Common myeloid progenitor, CD34-positive (primary cell): ENCODE measurements at regions of chr11 and their contacts with region 1.

Region 1: GRCh38 chr11:121318848-121319834 is 26.6 kb downstream of the SC5D start:
- DNase-seq: peak; percentile 63 to 83 (median 81)
- H3K4me3 ChIP-seq: no peak overlapping the region
- H3K27ac ChIP-seq: no peak overlapping the region
- H3K4me1 ChIP-seq: peaks cover 7 to 13% (median 10%) of the 10 kb centered on the region in 4 experiments
- H3K27me3 ChIP-seq: no peaks in the 10 kb centered on the region

Region 2: GRCh38 chr11:121367001-121367843 is 48.1 kb after region 1 on chr11:
- CTCF ChIA-PET with region 1: no interaction called
- POLR2A ChIA-PET with region 1: no interaction called
- DNase-seq: peak; percentile 60 to 89 (median 89)
- H3K4me3 ChIP-seq: peak overlapping the region in 2 of 7 experiments; percentile 11 to 46
- H3K27ac ChIP-seq: no peak overlapping the region
- H3K4me1 ChIP-seq: peaks cover 8 to 19% (median 15%) of the 10 kb centered on the region in 4 experiments
- H3K27me3 ChIP-seq: no peaks in the 10 kb centered on the region

Region 3: GRCh38 chr11:121534131-121535093 is 215.3 kb after region 1 on chr11:
- CTCF ChIA-PET with region 1: interaction called, 15 read pairs
- POLR2A ChIA-PET with region 1: interaction called, 3 read pairs
- DNase-seq: peak; percentile 50 to 74 (median 73)
- H3K4me3 ChIP-seq: no peak overlapping the region
- H3K27ac ChIP-seq: no peak overlapping the region
- H3K4me1 ChIP-seq: peaks cover 6 to 10% (median 9%) of the 10 kb centered on the region in 4 experiments
- H3K27me3 ChIP-seq: no peaks in the 10 kb centered on the region

Region 4: GRCh38 chr11:121591405-121592033 is 272.4 kb after region 1 on chr11:
- CTCF ChIA-PET with region 1: interaction called, 49 read pairs
- POLR2A ChIA-PET with region 1: interaction called, 3 read pairs
- DNase-seq: peak; percentile 83 to 90 (median 85)
- H3K4me3 ChIP-seq: peak overlapping the region in 5 of 7 experiments; percentile 51 to 68 (median 63)
- H3K27ac ChIP-seq: peak overlapping the region in 1 of 2 experiments; percentile 84
- H3K4me1 ChIP-seq: peaks cover 26 to 69% (median 53%) of the 10 kb centered on the region in 4 experiments
- H3K27me3 ChIP-seq: no peaks in the 10 kb centered on the region